Mammary epithelial cell (primary cell): ENCODE measurements at regions of chr1 and their contacts with region 1.

Region 1: GRCh38 chr1:25895365-25895993 is 10.7 kb downstream of the STMN1 start:
- DNase-seq: peak; percentile 77
- H3K4me3 ChIP-seq: no peak overlapping the region
- H3K27ac ChIP-seq: no peak overlapping the region
- H3K4me1 ChIP-seq: peaks cover 35% of the 10 kb centered on the region
- H3K27me3 ChIP-seq: no peaks in the 10 kb centered on the region
- CTCF ChIP-seq: peak; percentile 97 to 99

Region 2: DNA sequence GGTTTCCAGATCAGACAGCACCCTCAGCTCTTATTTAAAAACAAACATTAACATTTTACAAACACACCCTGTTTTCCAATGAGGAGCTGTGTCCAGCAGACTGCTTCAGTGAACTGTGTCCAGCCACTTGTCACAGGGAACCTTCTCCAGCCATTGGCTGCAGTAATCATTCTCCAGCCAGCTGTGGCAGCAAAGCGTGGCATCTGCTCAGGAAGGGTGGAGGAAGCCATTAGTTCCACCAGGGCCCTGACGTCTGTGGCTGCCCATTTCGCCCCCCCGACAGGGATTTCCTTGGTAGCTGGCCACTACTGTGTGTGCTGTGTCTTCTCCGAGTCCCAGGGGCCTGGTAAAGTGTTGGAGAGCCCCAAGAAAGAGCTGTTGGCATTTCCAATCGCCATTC is 158.3 kb before region 1 on chr1:
- CTCF ChIA-PET with region 1: no interaction called
- dilution Hi-C with region 1: no loop called
- in situ Hi-C with region 1: no loop called
- intact Hi-C with region 1: no loop called
- DNase-seq: no peak
- H3K4me3 ChIP-seq: no peak overlapping the region
- H3K27ac ChIP-seq: no peak overlapping the region
- H3K4me1 ChIP-seq: no peaks in the 10 kb centered on the region
- H3K27me3 ChIP-seq: no peaks in the 10 kb centered on the region
- CTCF ChIP-seq: no peak

Region 3: GRCh38 chr1:25837262-25837875 is 58.1 kb before region 1 on chr1:
- CTCF ChIA-PET with region 1: interaction called, 10 read pairs
- dilution Hi-C with region 1: no loop called
- in situ Hi-C with region 1: loop called in 1 of 2 experiments (anchors 10 kb)
- intact Hi-C with region 1: loop called (anchors 1 kb)
- DNase-seq: peak; percentile 22
- H3K4me3 ChIP-seq: no peak overlapping the region
- H3K27ac ChIP-seq: no peak overlapping the region
- H3K4me1 ChIP-seq: no peaks in the 10 kb centered on the region
- H3K27me3 ChIP-seq: no peaks in the 10 kb centered on the region
- CTCF ChIP-seq: peak; percentile 59 to 66

Region 4: GRCh38 chr1:25858906-25859789 is 36.3 kb before region 1 on chr1 and contains the start of gene AUNIP:
- CTCF ChIA-PET with region 1: no interaction called
- dilution Hi-C with region 1: loop called (anchors 5 kb)
- in situ Hi-C with region 1: no loop called
- intact Hi-C with region 1: loop called (anchors 1 kb)
- DNase-seq: peak; percentile 89
- H3K4me3 ChIP-seq: peak within 1 kb of the TSS; percentile 37 to 93 (median 88)
- H3K27ac ChIP-seq: peak within 1 kb of the TSS; percentile 73
- H3K4me1 ChIP-seq: peaks cover 9% of the 10 kb centered on the region
- H3K27me3 ChIP-seq: no peaks in the 10 kb centered on the region
- CTCF ChIP-seq: no peak
- total RNA-seq, gene AUNIP: 5.7 to 9.3 TPM

Region 5: GRCh38 chr1:25905680-25906643 is 10.5 kb after region 1 on chr1 and contains the start of gene STMN1:
- CTCF ChIA-PET with region 1: no interaction called
- dilution Hi-C with region 1: no loop called
- in situ Hi-C with region 1: no loop called
- intact Hi-C with region 1: loop called (anchors 1 kb)
- DNase-seq: peak; percentile 81
- H3K4me3 ChIP-seq: peak within 1 kb of the TSS; percentile 72 to 94 (median 89)
- H3K27ac ChIP-seq: peak within 1 kb of the TSS; percentile 87
- H3K4me1 ChIP-seq: peaks cover 16% of the 10 kb centered on the region
- H3K27me3 ChIP-seq: no peaks in the 10 kb centered on the region
- CTCF ChIP-seq: no peak
- total RNA-seq, gene STMN1: 42.5 to 202 TPM

Region 6: DNA sequence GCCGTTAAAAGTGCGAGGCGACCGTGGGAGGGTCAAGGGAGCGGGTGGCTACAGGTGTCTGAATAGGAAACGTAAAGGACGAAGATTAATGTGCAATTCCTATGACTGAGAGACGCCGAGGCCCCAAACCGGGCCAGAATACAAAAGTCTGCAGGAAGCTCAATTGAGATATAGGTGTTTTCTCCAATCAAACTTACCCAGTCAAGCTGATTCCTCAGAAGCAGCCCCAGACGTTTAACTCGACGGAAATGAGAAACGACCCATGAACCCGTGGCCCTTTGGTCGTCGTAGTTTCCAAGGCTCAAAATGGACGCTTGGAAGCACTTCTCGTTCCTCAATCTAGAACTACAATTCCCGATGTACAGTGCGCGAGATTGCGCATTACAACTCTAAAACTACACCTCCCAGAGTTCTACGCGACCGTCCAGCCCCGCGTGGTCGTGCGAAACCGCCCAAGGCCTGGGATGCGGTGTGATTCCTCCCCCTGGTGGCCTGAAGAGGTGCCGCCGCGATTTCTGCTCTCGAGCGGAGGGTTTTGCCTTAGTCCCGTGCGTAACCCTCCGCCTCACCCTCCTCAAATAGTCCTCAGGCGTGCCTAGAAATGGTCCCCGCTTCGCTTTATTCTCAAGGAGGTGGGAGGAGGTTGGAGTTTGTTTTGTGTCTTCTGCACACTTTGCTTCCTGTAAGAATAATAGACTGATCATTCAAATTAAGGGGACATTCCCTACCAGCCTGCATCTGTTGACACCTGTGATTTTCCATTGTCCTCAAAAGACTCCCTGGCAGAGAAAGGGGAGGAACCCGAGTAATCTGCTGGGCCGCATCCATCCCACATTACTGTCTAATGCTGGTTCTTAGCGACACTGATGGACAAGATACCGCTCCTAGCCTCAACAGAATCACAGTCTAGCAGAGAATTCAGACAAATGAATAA is 102.6 kb after region 1 on chr1 and contains the start of gene PAFAH2:
- CTCF ChIA-PET with region 1: interaction called, 16 read pairs
- dilution Hi-C with region 1: loop called (anchors 5 kb)
- in situ Hi-C with region 1: loop called in 1 of 2 experiments (anchors 5 kb)
- intact Hi-C with region 1: loop called (anchors 1 kb)
- DNase-seq: peak; percentile 99
- H3K4me3 ChIP-seq: peak within 1 kb of the TSS; percentile 63 to 64 (median 63)
- H3K27ac ChIP-seq: peak within 1 kb of the TSS; percentile 53
- H3K4me1 ChIP-seq: peaks cover 6% of the 10 kb centered on the region
- H3K27me3 ChIP-seq: no peaks in the 10 kb centered on the region
- CTCF ChIP-seq: peak; percentile 97 to 99
- total RNA-seq, gene PAFAH2: 15.1 to 17.2 TPM

Region 7: GRCh38 chr1:26145041-26145959 is 249.8 kb after region 1 on chr1:
- CTCF ChIA-PET with region 1: interaction called, 5 read pairs
- dilution Hi-C with region 1: no loop called
- in situ Hi-C with region 1: no loop called
- intact Hi-C with region 1: loop called (anchors 1 kb)
- DNase-seq: peak; percentile 62
- H3K4me3 ChIP-seq: no peak overlapping the region
- H3K27ac ChIP-seq: no peak overlapping the region
- H3K4me1 ChIP-seq: no peaks in the 10 kb centered on the region
- H3K27me3 ChIP-seq: no peaks in the 10 kb centered on the region
- CTCF ChIP-seq: peak; percentile 59 to 77